A673 (cell line): ENCODE measurements at regions of chr4 and their contacts with region 1.

Region 1: DNA sequence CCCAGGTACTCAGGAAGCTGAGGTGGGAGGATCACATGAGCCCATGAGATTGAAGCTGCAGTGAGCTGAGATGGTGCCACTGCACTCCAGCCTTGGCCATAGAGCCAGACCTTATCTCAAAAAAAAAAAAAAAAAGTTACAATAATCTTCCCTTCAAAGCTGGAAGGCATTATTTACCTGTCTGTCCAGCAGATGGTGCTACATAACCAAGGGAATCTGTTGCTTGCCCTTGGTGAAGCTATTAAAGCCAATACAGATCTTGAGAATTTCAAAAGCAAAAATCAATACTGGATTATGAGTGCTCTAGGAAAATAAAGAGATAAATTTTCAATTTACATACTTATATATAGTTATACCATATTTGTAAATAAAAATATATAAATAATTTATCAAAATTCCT is 25.9 kb downstream of the PKD2 start:
- DNase-seq: peak; percentile 47
- H3K4me3 ChIP-seq: no peak overlapping the region
- H3K27ac ChIP-seq: no peak overlapping the region
- H3K4me1 ChIP-seq: no peaks in the 10 kb centered on the region
- H3K27me3 ChIP-seq: no peaks in the 10 kb centered on the region
- CTCF ChIP-seq: peak; percentile 59

Region 2: DNA sequence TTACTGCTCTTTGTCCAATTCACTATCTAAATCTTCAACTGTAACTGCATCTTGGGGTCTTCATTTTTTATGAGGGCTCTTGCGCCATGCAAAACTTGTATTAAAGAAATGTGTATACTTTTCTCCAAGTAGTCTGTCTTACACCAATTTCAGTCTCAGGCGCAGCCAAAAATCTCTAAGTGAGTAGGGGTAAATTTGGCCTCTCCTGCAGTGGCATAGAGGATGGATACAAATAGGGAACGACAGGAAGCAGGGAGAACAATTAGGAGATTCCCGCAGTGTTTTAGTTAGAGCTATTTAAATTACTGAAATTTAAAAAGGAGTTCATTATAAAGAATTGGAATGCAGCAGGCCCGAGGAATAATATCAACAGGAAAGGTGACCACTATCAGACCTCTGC is 353.0 kb before region 1 on chr4:
- CTCF ChIA-PET with region 1: no interaction called
- POLR2A ChIA-PET with region 1: no interaction called
- intact Hi-C with region 1: no loop called
- DNase-seq: no peak
- H3K4me3 ChIP-seq: no peak overlapping the region
- H3K27ac ChIP-seq: no peak overlapping the region
- H3K4me1 ChIP-seq: no peaks in the 10 kb centered on the region
- H3K27me3 ChIP-seq: no peaks in the 10 kb centered on the region
- CTCF ChIP-seq: no peak

Region 3: GRCh38 chr4:88211473-88212252 is 178.4 kb after region 1 on chr4:
- CTCF ChIA-PET with region 1: interaction called, 8 read pairs
- POLR2A ChIA-PET with region 1: no interaction called
- intact Hi-C with region 1: loop called (anchors 2 kb)
- DNase-seq: peak; percentile 40
- H3K4me3 ChIP-seq: no peak overlapping the region
- H3K27ac ChIP-seq: no peak overlapping the region
- H3K4me1 ChIP-seq: no peaks in the 10 kb centered on the region
- H3K27me3 ChIP-seq: no peaks in the 10 kb centered on the region
- CTCF ChIP-seq: peak; percentile 56

Region 4: GRCh38 chr4:88514557-88515511 is 481.5 kb after region 1 on chr4:
- CTCF ChIA-PET with region 1: no interaction called
- POLR2A ChIA-PET with region 1: no interaction called
- intact Hi-C with region 1: loop called (anchors 10 kb)
- DNase-seq: no peak
- H3K4me3 ChIP-seq: no peak overlapping the region
- H3K27ac ChIP-seq: no peak overlapping the region
- H3K4me1 ChIP-seq: no peaks in the 10 kb centered on the region
- H3K27me3 ChIP-seq: no peaks in the 10 kb centered on the region
- CTCF ChIP-seq: no peak